ENCODE measurements at regions of chr11 and their contacts with region 1.

Region 1: DNA sequence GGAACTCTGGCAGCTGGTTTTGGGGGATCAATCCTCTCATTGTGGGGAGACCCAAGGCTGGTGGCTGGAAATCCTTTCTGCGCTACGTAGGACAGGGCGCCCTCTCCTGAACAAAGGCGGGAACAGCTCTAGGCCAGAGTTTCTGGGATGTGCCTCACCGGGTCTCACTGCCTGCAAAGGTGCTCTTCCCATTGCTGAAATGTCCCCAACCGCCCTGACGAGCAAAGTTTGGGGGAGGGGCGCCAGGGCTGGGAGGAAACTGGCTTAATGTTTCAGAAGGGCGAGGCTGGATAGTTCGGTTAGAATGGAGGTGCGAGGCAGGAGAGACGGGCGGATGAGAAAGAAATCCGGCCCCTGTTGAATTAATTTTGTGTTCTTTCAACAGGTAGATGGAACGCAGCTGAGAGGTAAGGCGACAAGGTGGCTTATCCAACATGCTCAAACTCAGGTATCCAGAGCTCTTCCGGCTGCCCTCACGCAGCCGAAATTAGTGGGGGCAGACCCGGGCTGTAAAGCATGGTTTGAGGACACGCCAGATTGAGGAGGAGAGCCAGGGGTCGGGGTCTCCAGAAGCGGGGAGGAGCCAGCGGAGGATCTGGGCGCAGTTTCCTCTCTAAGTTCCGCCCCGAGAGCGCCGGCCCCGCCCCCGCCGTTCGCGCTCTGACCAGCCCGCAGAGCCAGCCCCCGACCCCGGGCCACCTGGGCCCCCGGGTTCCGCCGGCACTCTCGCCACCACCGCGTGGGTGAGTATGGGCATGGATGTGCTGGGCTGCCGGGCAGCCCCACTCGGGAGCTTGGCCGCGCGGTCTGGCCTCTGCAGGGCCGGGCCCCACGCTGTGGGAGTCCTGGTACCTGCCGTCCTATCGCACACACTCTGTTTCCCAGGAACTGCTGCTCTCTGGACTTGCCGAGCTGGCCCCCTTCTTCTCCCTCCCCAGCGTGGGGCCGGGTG is at the start of gene PGAP2:
- DNase-seq: peak; percentile 80
- CTCF ChIP-seq: peak; percentile 72

Region 2: DNA sequence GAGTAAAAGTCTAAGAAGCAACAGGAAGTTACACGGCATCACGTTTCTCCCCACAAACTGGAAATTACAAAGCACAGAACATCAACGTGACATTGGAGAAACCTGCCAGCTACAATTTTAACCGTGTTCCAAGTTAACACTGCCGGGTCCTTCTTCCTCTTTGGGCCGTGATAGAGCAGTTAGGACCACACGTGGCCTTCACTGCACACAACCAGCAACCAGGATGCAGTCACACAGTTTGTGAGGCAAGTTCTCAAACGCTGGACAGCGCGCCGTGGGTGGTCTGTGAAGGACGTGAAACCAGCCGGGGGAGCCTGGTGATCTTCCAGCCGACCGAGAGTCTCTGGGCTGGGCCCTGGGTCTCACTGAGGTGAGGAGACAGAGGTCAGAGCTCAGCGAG is 1521.1 kb before region 1 on chr11:
- CTCF ChIA-PET with region 1: no interaction called
- POLR2A ChIA-PET with region 1: no interaction called
- DNase-seq: no peak
- CTCF ChIP-seq: no peak

Region 3: GRCh38 chr11:3735827-3736226 is 72.4 kb before region 1 on chr11:
- CTCF ChIA-PET with region 1: no interaction called
- POLR2A ChIA-PET with region 1: no interaction called
- DNase-seq: no peak
- CTCF ChIP-seq: no peak

Region 4: GRCh38 chr11:3773180-3773579 is 35.0 kb before region 1 on chr11:
- CTCF ChIA-PET with region 1: interaction called, 12 read pairs
- POLR2A ChIA-PET with region 1: no interaction called
- DNase-seq: no peak
- CTCF ChIP-seq: no peak

Region 5: GRCh38 chr11:3781423-3781822 is 26.8 kb before region 1 on chr11:
- CTCF ChIA-PET with region 1: interaction called, 47 read pairs
- POLR2A ChIA-PET with region 1: interaction called, 3 read pairs
- DNase-seq: no peak
- CTCF ChIP-seq: no peak

Region 6: GRCh38 chr11:3797329-3798095 is 10.7 kb before region 1 on chr11 and contains the start of gene NUP98:
- CTCF ChIA-PET with region 1: interaction called, 39 read pairs
- POLR2A ChIA-PET with region 1: interaction called, 3 read pairs
- DNase-seq: peak; percentile 99
- CTCF ChIP-seq: no peak

Region 7: DNA sequence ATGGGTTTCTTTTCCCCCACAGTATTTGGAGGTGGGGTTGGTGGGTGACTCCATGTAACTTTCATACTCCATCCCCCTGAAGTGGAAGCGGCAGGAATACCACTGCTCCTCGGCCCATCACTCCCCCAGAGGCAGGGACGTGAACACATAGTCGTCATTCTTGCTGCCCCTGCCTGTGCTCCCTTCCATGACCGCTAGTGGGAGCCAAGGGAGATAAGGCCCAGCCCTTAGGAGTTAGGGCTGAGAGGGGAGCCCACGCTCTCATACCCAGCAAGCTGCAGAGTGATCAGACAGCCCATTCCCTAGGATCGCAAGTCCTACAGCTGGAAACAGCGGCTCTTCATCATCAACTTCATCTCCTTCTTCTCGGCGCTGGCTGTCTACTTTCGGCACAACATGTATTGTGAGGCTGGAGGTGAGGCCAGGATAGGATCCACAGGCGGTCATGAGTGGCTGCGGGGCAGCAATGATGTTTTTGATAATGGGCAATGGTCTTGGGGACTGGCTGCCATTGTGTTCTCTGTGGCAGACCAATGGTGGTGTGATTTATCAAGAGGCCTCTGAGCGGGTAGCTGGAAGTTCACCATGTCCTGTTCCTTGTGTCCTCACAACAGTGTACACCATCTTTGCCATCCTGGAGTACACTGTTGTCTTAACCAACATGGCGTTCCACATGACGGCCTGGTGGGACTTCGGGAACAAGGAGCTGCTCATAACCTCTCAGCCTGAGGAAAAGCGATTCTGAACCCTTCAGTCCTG is 16.7 kb after region 1 on chr11:
- CTCF ChIA-PET with region 1: interaction called, 47 read pairs
- POLR2A ChIA-PET with region 1: interaction called, 5 read pairs
- DNase-seq: peak; percentile 83
- CTCF ChIP-seq: peak; percentile 71

Region 8: DNA sequence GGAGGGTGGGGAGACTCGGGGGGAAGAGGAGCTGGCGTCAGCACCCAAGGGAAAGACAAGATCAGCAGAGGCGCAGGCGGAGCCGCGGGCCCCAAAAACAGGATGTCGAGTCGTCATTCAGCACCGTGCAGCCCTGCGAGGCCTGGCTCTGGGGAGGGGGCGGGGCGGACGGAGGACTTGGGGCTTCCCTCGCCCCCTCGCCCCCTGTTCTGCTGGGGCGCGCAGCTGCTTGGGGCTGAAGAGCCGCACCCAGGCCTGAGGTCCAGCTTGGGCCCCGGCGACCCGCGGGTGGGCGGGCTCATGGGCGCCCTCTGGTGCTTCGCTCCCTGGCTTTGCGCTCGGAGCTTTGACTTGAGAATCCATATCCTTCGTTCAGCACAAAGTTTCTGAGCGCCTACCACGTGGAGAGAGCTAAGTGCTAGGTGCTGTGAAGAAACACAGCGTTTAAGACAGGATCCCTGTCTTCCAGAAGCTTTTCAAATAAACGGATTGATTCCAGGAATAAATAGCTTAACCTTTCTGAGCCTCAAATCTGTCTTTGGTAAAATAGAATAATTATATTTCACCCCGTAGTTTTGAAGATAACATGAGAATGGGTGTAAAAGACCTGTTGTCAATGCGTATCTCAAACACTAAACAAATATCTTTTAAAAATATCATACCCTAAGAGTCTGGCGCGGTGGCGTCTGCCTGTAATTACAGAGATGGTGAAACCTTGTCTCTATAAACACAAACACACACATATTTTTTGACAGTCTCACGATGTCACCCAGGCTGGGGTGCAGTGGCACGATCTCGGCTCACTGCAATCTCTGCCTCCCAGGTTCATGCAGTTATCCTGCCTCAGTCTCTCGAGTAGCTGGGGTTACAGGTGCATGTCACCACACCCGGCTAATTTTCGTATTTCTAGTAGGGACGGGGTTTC is 33.5 kb after region 1 on chr11:
- CTCF ChIA-PET with region 1: interaction called, 14 read pairs
- POLR2A ChIA-PET with region 1: interaction called, 5 read pairs
- DNase-seq: peak; percentile 87
- CTCF ChIP-seq: peak; percentile 87

Region 9: DNA sequence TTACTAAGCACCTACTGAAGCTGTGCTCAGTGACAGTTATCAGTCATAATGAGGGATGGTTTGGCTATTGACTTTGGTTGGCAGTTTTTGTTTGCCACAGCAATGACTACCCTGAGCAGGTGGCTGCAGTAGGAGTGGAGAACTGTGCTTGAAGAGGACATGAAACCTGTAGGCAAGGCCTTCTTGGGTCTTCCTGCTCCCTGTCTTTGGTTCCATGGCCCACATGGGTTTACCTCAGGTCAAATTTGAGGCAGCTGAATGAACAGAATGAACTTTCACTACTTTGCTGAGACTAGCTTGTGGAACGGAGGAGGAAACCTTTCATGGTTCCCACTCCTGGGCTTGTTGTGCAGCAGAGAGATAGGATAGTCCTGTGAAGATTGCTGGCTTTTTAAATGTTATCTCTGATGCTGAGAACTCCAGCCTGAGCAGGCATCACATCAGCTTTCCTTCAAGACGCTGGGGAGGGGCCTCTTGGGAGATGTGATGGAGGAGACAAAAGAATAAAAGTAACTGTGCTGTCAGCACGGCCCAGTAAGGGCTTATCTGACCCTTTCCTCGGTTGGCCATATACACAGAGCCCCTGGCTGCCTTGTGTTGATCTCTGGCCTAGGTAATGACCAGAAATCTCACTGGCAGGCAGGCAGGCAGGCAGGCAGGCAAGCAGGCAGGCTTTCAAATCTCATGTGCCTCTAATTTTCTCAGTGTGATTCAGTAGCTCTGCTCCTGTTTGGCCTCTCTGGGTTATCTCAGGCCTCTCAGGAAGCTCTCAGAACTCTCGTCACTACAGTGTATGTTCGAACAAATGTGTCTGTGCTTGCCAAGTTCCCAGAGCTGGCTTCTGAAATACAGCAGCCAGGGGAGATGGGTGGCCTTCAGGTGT is 59.3 kb after region 1 on chr11:
- CTCF ChIA-PET with region 1: no interaction called
- POLR2A ChIA-PET with region 1: no interaction called
- DNase-seq: no peak
- CTCF ChIP-seq: no peak

Region 10: DNA sequence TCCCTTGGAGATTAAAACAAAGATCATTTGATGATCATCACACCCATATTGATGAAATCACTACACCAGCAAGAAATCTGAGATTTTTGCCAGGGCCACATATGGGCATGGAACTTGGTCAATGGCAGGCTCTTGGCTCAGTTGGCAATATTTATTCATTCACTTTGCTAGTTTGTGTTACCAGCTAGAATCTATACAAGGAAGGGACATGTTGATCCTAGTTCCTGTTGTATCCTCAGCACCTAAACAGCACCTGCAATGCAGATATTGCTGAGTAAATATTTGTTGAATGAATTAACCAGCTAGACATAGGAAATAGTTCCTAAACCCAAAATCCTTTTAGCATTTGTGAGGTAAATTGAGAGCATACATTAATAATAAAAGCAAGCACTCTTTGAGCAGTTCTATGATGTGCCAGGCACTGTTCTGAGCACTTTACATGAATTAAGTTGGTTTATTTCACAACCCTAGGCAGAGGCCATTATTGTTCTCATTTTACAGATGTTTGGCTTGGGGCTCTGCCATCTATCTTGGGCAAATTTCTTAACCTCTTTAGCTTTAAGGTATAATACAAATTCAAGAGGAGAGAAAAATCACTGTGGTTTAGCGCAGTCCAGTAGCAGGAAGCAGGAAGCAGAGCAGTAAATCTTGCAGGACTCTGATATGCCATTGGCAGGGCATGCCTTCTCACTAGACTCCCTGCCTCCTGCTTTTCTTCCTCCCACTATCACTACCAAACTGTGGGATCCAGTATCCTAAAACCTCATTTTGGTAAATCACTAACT is 798.2 kb after region 1 on chr11:
- CTCF ChIA-PET with region 1: no interaction called
- POLR2A ChIA-PET with region 1: no interaction called
- DNase-seq: no peak
- CTCF ChIP-seq: no peak